WTC11 (cell line): ENCODE measurements at regions of chr3 and their contacts with region 1.

Region 1: DNA sequence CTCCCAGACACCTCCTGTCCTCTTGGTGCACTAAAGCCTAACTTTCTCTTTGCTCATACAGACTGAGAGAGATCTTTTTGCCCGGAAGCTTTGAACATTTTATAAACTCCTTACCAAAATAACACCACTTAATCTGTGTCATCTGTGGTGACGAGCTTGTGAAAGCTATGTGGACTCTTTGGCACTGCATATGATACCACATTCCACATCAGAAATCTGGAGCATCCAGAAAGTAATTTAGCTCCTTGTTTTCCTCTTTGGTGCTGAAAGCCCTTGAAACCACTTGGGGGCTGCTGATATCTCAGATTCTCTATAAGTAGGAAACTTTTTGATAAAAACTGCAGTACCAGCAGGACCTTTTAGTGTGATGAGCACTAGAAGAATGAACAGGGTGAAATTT is 128.3 kb downstream of the ALCAM start:
- DNase-seq: no peak
- ATAC-seq: no peak; the same call in 1 of the 2 replicates
- H3K4me3 Mint-ChIP-seq: no peak overlapping the region
- H3K27ac Mint-ChIP-seq: peak overlapping the region; percentile 60
- H3K4me1 Mint-ChIP-seq: peaks cover 26% of the 10 kb centered on the region
- H3K27me3 Mint-ChIP-seq: no peaks in the 10 kb centered on the region
- CTCF ChIP-seq: no peak

Region 2: GRCh38 chr3:104909198-104909597 is 585.8 kb before region 1 on chr3:
- CTCF ChIA-PET with region 1: no interaction called
- POLR2A ChIA-PET with region 1: interaction called, 10 read pairs
- DNase-seq: no peak
- ATAC-seq: peak; percentile 36
- H3K4me3 Mint-ChIP-seq: no peak overlapping the region
- H3K27ac Mint-ChIP-seq: no peak overlapping the region; the same call in 1 of the 2 replicates
- H3K4me1 Mint-ChIP-seq: peaks cover 20% of the 10 kb centered on the region
- H3K27me3 Mint-ChIP-seq: no peaks in the 10 kb centered on the region
- CTCF ChIP-seq: no peak